ENCODE measurements at regions of chr6 and their contacts with region 1.

Region 1: GRCh38 chr6:42901536-42901957 is 14.3 kb upstream of the PTCRA start:
- DNase-seq: peak; percentile 77
- ATAC-seq: peak; percentile 93
- H3K4me3 Mint-ChIP-seq: peak overlapping the region; percentile 7
- H3K27ac Mint-ChIP-seq: no peak overlapping the region
- H3K4me1 Mint-ChIP-seq: peaks cover 9% of the 10 kb centered on the region
- H3K27me3 Mint-ChIP-seq: no peaks in the 10 kb centered on the region

Region 2: DNA sequence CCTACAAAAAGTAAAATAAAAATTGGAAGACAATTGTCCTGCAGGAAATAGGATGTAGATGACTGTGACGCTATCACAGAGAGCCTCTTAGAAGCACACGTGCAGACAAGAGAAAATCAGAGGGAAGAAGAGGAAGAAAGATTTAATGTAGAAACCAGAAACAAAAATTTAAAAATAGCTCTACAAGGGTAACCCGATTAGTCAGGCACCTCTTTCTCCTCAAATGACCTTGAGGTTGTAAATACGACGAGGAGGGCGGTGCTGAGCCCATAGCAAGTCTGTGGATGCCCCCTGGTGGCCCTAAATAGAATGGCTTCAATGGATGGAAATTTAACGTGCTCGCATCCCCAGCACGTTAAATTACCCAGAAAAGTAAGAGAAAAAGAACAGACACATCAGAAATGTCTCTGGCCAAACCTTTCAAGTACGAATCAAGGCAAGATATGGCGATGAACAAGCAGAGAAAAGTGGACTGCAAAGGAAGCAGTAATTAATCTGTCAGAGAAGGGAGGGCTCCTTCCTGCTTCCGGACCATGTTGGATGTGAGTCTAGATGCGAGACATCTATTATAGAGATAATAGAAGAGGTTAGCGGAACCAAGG is 175.0 kb before region 1 on chr6:
- CTCF ChIA-PET with region 1: interaction called, 6 read pairs
- POLR2A ChIA-PET with region 1: no interaction called
- intact Hi-C with region 1: loop called (anchors 1 to 2 kb)
- DNase-seq: peak; percentile 85
- ATAC-seq: peak; percentile 98
- H3K4me3 Mint-ChIP-seq: peak overlapping the region; percentile 69
- H3K27ac Mint-ChIP-seq: peak overlapping the region; percentile 95
- H3K4me1 Mint-ChIP-seq: peaks cover 19% of the 10 kb centered on the region
- H3K27me3 Mint-ChIP-seq: no peaks in the 10 kb centered on the region

Region 3: DNA sequence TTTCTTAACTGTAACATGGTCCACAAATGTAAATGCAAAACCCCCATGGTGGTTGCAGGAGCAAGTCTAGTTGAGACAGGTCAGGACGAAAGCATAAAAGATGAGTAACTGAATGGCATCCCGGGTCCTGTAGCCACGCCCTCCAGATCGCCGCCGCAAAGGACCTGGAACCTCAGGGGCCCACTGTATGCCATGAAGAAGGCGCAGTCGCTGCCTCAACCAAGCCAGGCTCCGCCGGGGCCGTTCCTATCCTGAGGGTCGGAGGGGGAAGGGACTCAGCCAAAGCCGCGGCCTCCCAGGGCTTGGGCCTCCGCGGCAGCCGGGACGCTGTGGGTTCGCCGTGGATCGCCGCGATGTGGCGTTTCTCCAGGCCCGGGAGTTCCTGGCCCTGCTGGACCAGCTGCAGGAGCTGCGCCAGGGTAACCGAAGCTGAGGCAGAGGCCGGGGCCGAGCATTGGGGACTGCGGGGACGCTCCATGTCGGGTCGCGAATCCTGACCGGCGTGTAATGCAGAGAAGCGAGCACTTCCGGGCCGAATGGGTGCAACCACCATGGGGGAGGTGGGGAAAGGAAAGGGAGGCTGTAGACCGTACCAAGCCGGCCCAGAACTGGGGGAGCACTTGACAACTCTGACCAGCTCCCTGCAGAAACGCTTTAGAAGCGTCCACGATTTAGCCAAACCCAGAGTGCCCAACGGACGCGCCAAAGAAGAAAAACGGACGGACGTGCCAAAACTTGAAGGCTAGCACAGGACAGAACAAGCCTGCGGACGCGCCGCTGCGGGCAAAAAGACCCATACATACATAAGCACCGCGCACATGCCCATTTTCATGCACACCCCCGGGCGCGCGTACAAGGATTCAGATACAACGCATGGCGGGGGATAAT is 11.0 kb before region 1 on chr6:
- CTCF ChIA-PET with region 1: interaction called, 10 read pairs
- POLR2A ChIA-PET with region 1: no interaction called
- intact Hi-C with region 1: loop called in 1 of 2 experiments (anchors 1 kb)
- DNase-seq: peak; percentile 95
- ATAC-seq: peak; percentile 89
- H3K4me3 Mint-ChIP-seq: peak overlapping the region; percentile 90
- H3K27ac Mint-ChIP-seq: peak overlapping the region; percentile 98
- H3K4me1 Mint-ChIP-seq: peaks cover 31% of the 10 kb centered on the region
- H3K27me3 Mint-ChIP-seq: no peaks in the 10 kb centered on the region

Region 4: GRCh38 chr6:43021270-43022047 is 119.9 kb after region 1 on chr6 and contains the start of gene RRP36:
- CTCF ChIA-PET with region 1: interaction called, 4 read pairs
- POLR2A ChIA-PET with region 1: no interaction called
- intact Hi-C with region 1: loop called in 1 of 2 experiments (anchors 5 kb)
- DNase-seq: peak; percentile 83
- ATAC-seq: peak; percentile 84
- H3K4me3 Mint-ChIP-seq: peak within 1 kb of the TSS; percentile 93
- H3K27ac Mint-ChIP-seq: peak within 1 kb of the TSS; percentile 88
- H3K4me1 Mint-ChIP-seq: peaks cover 32% of the 10 kb centered on the region
- H3K27me3 Mint-ChIP-seq: no peaks in the 10 kb centered on the region
- total RNA-seq, gene RRP36: 45.8 to 48.1 TPM

Region 5: GRCh38 chr6:43070028-43070632 is 168.6 kb after region 1 on chr6:
- CTCF ChIA-PET with region 1: no interaction called
- POLR2A ChIA-PET with region 1: no interaction called
- intact Hi-C with region 1: loop called in 1 of 2 experiments (anchors 5 kb)
- DNase-seq: peak; percentile 47
- ATAC-seq: peak; percentile 85
- H3K4me3 Mint-ChIP-seq: no peak overlapping the region
- H3K27ac Mint-ChIP-seq: no peak overlapping the region
- H3K4me1 Mint-ChIP-seq: no peaks in the 10 kb centered on the region
- H3K27me3 Mint-ChIP-seq: no peaks in the 10 kb centered on the region

Region 6: DNA sequence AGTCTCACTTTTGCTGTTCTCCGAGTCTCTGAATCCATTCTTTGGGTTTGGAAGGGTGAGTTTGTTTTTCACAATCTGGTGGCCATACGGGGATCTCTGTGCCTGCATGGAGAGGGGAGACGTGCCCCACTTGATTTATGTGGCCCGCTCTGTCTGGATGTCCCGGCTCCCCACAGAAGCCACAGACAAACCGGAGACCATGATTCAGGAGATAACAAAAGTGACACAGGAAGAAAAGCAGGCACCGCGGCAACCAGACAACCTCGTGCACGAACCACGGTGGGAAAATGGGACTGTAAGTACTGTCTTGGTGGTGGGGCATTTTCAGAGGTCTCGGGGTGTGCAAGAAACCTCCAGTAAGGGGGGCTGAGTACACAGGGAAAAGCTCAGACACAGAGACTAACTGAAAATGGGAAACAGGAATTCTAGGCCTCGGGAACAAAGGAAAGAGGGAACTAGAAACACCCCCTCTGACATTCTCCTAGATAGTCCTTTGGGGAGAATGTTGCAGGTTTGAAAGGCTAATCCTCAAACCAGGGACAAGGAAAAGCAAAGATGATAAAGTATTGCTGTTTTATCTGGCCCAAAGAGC is 490.0 kb after region 1 on chr6:
- CTCF ChIA-PET with region 1: no interaction called
- POLR2A ChIA-PET with region 1: no interaction called
- intact Hi-C with region 1: loop called in 1 of 2 experiments (anchors 10 kb)
- DNase-seq: peak; percentile 55
- ATAC-seq: peak; percentile 44
- H3K4me3 Mint-ChIP-seq: peak overlapping the region; percentile 34
- H3K27ac Mint-ChIP-seq: peak overlapping the region; percentile 64
- H3K4me1 Mint-ChIP-seq: peaks cover 26% of the 10 kb centered on the region
- H3K27me3 Mint-ChIP-seq: peaks cover 2% of the 10 kb centered on the region

Measured in activated CD4-positive, alpha-beta T cell treated with anti-CD3 and anti-CD28 coated beads for 36 hours (primary cell).